ENCODE measurements at regions of chr7 and their contacts with region 1.

Region 1: GRCh38 chr7:30814700-30815387 is 43.6 kb downstream of the MINDY4 start:
- DNase-seq: no peak
- H3K4me3 ChIP-seq: no peak overlapping the region
- H3K27ac ChIP-seq: peak overlapping the region in 1 of 2 donors; percentile 62
- H3K4me1 ChIP-seq: peaks cover 11% of the 10 kb centered on the region
- H3K27me3 ChIP-seq: no peaks in the 10 kb centered on the region
- CTCF ChIP-seq: no peak
- EP300 ChIP-seq: no peak
- POLR2A ChIP-seq: no peak

Region 2: DNA sequence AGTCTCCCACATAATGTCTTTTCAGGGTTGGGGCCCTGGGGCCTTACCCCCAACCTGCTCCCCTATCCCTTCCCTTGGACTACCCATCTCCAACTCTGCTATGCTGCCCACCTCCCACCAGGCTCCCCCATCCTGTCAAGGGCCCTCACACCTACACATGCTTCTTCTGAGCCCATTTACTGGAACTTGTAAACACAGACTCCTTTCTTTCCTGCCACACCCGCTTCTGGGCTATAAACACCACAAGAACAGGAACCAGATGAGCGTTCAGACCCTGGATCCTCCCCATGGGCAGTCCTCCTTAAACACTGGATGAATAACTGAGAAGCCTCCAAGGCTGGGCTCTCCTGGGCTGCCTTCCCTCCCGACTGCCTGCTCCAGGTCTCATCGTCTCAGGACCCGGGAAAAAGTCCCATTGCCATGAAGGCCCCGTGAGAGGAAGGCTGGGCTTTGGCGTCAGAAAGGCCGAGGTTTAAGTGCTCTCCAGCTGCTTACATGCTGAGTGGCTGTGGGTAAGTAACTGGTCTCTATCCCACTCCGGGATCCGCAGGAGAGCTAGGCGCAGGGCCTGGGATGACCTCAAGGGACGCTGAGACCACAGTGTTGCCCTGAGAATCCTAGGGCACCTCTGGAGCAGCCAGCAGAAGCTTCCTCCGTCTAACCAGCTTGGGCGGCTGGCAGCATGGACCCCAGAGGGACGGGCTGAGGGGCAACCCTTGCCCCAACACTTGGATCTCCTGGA is 117.0 kb before region 1 on chr7:
- intact Hi-C with region 1: no loop called
- DNase-seq: no peak
- H3K4me3 ChIP-seq: no peak overlapping the region
- H3K27ac ChIP-seq: no peak overlapping the region
- H3K4me1 ChIP-seq: peaks cover 3% of the 10 kb centered on the region
- H3K27me3 ChIP-seq: no peaks in the 10 kb centered on the region
- CTCF ChIP-seq: no peak
- EP300 ChIP-seq: no peak
- POLR2A ChIP-seq: no peak

Region 3: DNA sequence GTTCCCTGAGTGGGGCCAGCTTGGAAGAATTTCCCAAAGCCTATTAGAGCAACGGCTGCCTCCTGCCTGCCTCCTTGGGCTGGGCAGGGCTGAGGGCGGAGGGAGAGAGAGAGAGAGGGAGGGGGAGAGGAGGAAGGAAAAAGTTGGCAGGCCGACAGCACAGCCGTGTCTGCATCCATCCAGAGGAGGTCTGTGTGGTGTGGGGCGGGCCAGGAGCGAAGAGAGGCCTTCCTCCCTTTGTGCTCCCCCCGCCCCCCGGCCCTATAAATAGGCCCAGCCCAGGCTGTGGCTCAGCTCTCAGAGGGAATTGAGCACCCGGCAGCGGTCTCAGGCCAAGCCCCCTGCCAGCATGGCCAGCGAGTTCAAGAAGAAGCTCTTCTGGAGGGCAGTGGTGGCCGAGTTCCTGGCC is 96.7 kb after region 1 on chr7 and contains the start of gene AQP1:
- intact Hi-C with region 1: loop called in 1 of 4 experiments (anchors 10 kb)
- DNase-seq: peak; percentile 61 to 76 (median 62)
- H3K4me3 ChIP-seq: peak within 1 kb of the TSS; percentile 14
- H3K27ac ChIP-seq: peak within 1 kb of the TSS in 1 of 2 donors; percentile 20
- H3K4me1 ChIP-seq: peaks cover 4% of the 10 kb centered on the region
- H3K27me3 ChIP-seq: no peaks in the 10 kb centered on the region
- CTCF ChIP-seq: no peak
- EP300 ChIP-seq: no peak
- POLR2A ChIP-seq: no peak
- total RNA-seq, gene AQP1: 10.2 to 114 (median 47.0) TPM

Measured in ovary (tissue), 10 donors.